Mammary epithelial cell (primary cell): ENCODE measurements at regions of chr7 and their contacts with region 1.

Region 1: GRCh38 chr7:26417911-26418413 is 126.3 kb downstream of the SNX10 start:
- DNase-seq: no peak
- H3K4me3 ChIP-seq: no peak overlapping the region
- H3K27ac ChIP-seq: no peak overlapping the region
- H3K4me1 ChIP-seq: no peaks in the 10 kb centered on the region
- H3K27me3 ChIP-seq: peaks cover 2% of the 10 kb centered on the region
- CTCF ChIP-seq: no peak

Region 2: DNA sequence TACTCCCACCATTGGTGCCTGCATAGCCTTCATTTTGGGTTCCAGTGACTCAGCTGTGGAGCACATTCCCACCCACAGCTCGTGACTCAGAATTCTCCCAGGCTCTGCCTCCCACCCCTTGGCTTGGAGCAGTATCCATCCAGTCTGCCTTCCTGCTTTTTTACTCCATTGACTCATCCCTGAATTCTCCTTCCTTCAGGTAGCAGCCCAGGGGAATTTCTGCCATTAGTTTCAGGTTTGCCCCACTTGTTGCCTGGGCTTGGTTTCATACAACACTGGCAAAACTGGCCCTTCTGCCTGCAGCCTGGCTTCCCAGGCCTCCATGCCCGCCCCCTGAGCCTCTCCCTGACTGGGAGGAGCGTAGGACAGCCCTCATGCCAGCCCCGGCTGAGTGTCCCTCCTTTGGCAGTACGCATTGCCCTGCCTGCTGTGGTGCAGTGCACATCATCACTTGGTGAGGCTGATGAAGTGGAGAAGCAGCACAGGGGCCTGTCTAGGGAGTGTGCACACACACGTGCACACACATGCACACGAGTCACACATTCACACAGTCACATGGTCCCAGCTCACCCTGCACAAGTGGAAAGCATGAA is 71.3 kb before region 1 on chr7:
- CTCF ChIA-PET with region 1: no interaction called
- dilution Hi-C with region 1: loop called (anchors 5 kb)
- in situ Hi-C with region 1: no loop called
- intact Hi-C with region 1: no loop called
- DNase-seq: peak; percentile 94
- H3K4me3 ChIP-seq: no peak overlapping the region
- H3K27ac ChIP-seq: peak overlapping the region; percentile 54
- H3K4me1 ChIP-seq: peaks cover 7% of the 10 kb centered on the region
- H3K27me3 ChIP-seq: no peaks in the 10 kb centered on the region
- CTCF ChIP-seq: no peak

Region 3: DNA sequence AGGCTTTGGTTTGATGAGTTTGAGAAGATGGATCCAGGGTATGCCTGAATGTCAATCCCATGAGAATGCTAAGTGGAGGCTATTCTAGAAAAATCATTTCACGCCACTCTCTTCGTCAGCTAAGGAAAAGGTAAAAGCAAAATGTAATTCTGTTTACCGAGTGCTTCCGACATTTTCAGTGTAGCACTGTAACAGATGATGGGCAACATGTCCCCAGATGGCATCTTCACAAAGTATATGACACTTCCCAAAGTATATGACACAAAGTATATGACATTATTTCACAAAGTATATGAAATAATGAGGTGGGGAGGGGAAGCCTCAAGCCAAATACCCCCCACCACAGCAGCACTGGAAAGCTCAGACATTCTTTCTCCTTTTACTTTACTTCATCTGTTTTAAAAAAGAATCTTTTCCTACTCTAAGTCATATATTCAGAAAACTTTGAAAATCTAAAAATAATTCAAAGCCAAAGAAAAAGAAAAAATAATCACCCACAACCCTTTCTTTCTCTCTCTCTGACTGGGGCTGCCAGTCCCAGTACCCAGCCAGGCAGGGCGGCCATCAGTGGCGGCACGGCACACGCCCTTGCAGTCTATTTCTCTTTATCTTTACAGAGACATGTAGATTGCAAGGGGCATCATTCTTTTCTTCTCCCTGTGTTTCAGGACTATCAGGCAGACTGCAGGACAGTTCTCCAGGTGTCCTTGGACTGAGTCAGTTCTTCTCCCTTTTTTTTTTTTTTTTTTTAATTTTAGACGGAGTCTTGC is 53.5 kb after region 1 on chr7:
- CTCF ChIA-PET with region 1: no interaction called
- dilution Hi-C with region 1: loop called (anchors 5 kb)
- in situ Hi-C with region 1: no loop called
- intact Hi-C with region 1: no loop called
- DNase-seq: no peak
- H3K4me3 ChIP-seq: no peak overlapping the region
- H3K27ac ChIP-seq: no peak overlapping the region
- H3K4me1 ChIP-seq: no peaks in the 10 kb centered on the region
- H3K27me3 ChIP-seq: no peaks in the 10 kb centered on the region
- CTCF ChIP-seq: no peak

Region 4: DNA sequence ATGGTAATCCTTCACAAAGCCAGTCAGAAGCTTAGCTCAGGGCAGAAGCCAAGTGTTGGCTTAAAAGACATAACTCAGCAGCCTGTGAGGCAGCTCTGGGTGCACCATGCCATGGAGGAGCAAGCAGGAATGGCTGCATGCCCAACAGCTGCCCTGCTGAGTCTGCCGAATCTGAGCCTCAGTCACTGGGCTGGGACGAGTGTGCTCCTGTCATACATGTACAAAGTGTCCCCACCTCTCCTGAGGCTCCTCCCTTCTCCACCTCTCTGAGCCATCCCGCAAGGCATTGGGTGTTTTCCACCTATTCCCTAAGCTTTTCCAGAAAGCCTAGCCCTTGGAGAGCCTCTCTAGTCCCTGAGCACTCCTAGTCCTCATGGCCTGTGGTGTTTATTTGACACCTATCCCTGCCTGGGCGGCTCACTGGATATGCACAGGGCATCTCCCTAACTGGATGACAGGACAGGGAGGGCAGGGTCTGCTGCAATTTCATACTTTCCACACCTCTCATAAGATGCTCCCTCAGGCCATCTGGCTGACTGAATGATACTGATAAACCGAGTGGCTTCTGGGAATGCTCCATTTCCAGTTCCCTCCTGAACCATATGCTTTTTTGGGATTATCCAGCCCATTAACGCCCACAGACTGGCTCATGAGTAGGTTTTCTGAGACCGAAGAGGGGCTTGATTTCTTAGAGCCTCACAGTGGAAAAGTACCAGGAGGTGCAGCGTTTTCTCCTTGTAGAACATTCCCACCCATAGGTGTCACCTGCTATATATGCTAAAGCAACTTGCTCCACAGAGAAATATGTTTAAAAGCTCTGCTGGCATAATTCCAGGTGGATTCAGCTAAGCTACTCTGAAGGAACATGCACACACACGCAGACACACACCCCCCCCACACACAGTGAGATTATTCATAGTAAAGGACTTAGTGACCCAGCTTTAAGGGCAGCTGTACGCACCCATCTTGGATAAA is 73.0 kb after region 1 on chr7:
- CTCF ChIA-PET with region 1: no interaction called
- dilution Hi-C with region 1: no loop called
- in situ Hi-C with region 1: no loop called
- intact Hi-C with region 1: no loop called
- DNase-seq: peak; percentile 91
- H3K4me3 ChIP-seq: no peak overlapping the region
- H3K27ac ChIP-seq: no peak overlapping the region
- H3K4me1 ChIP-seq: peaks cover 17% of the 10 kb centered on the region
- H3K27me3 ChIP-seq: no peaks in the 10 kb centered on the region
- CTCF ChIP-seq: peak in 1 of 2 donors; percentile 40